Activated CD4-positive, alpha-beta memory T cell treated with anti-CD3 and anti-CD28 coated beads, Interleukin-2, amount 10 ng/mL, durations not matched to agents 7 days and 5 days (primary cell): ENCODE measurements at regions of chr9 and their contacts with region 1.

Region 1: DNA sequence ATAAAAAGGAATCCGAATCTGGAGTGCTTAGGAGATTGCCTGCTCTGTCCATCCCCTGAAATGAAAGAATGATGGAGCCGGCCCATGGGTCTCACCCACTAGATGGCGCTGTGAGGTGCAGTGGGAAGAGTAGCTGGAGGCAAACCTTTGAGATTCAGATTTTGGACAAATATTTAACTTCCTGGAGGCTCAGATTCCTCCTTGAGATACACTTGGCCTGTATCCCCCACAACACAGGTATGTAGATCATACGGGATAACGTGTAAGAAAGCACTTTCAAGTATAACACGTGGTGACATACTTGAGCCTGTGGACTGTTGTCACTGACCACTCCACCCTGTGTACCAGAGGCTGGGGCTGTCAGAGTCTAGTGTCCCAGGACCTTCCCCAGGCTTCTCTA is 32.3 kb downstream of the TRMO start:
- DNase-seq: peak; percentile 75
- H3K4me3 Mint-ChIP-seq: no peak overlapping the region
- H3K27ac Mint-ChIP-seq: no peak overlapping the region
- H3K4me1 Mint-ChIP-seq: peaks cover 4% of the 10 kb centered on the region
- H3K27me3 Mint-ChIP-seq: no peaks in the 10 kb centered on the region

Region 2: DNA sequence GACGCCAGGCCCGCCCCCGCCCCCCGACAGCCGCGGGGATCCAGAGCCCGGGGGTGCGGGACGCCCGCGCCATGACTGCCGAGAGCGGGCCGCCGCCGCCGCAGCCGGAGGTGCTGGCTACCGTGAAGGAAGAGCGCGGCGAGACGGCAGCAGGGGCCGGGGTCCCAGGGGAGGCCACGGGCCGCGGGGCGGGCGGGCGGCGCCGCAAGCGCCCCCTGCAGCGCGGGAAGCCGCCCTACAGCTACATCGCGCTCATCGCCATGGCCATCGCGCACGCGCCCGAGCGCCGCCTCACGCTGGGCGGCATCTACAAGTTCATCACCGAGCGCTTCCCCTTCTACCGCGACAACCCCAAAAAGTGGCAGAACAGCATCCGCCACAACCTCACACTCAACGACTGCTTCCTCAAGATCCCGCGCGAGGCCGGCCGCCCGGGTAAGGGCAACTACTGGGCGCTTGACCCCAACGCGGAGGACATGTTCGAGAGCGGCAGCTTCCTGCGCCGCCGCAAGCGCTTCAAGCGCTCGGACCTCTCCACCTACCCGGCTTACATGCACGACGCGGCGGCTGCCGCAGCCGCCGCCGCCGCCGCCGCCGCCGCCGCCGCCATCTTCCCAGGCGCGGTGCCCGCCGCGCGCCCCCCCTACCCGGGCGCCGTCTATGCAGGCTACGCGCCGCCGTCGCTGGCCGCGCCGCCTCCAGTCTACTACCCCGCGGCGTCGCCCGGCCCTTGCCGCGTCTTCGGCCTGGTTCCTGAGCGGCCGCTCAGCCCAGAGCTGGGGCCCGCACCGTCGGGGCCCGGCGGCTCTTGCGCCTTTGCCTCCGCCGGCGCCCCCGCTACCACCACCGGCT is 36.0 kb before region 1 on chr9:
- CTCF ChIA-PET with region 1: no interaction called
- POLR2A ChIA-PET with region 1: no interaction called
- DNase-seq: peak; percentile 71
- H3K4me3 Mint-ChIP-seq: peak overlapping the region; percentile 72
- H3K27ac Mint-ChIP-seq: peak overlapping the region; percentile 5
- H3K4me1 Mint-ChIP-seq: peaks cover 27% of the 10 kb centered on the region
- H3K27me3 Mint-ChIP-seq: peaks cover 81% of the 10 kb centered on the region

Region 3: GRCh38 chr9:97906236-97906831 is 16.3 kb after region 1 on chr9:
- CTCF ChIA-PET with region 1: interaction called, 156 read pairs
- POLR2A ChIA-PET with region 1: interaction called, 15 read pairs
- DNase-seq: peak; percentile 66
- H3K4me3 Mint-ChIP-seq: peak overlapping the region; percentile 72
- H3K27ac Mint-ChIP-seq: peak overlapping the region; percentile 99
- H3K4me1 Mint-ChIP-seq: peaks cover 78% of the 10 kb centered on the region
- H3K27me3 Mint-ChIP-seq: no peaks in the 10 kb centered on the region